ENCODE measurements at regions of chr1 and their contacts with region 1.

Region 1: GRCh38 chr1:31564134-31564989 is 12.0 kb upstream of the TINAGL1 start:
- DNase-seq: peak; percentile 80
- CTCF ChIP-seq: peak; percentile 64

Region 2: DNA sequence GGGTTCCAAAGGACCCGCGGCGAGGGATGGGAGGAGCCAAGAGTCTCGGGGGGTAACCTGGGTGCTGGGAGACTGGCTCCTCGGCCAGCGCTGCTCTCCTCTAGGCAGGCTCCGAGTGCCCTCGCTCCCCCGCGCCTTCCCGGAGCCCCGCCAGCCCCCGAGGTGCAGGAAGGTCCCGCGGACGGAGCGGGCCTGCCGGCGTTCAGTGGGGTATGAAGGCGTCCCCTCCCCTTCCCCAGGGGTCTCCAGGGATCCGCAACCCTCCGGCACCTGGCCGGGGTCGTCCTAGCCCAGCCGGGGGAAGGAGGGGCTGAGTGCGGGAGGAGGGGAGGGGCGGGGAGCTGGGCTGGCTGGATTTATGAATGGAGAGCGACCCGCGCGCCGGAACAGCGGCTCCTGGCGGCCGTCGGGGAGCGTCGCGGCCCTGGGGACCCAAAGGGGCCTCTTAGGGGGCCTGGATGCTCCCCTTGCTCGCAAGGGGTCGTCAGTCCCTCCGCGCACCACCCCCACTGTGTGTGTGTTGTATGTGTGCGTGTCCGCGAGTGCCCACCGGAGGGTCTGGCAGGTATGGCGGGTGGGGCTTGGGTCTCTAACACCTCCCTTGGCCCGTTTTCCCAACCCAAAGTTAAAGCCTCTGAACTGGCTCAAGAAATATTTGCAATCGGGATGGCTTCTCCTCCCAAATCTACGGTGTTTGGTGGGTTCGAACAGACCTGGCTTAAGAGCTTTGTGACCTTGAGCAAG is 53.7 kb after region 1 on chr1:
- in situ Hi-C with region 1: loop called (anchors 10 kb)
- DNase-seq: peak; percentile 88
- CTCF ChIP-seq: peak; percentile 65

Region 3: GRCh38 chr1:31822766-31823165 is 258.4 kb after region 1 on chr1:
- in situ Hi-C with region 1: no loop called
- DNase-seq: no peak
- CTCF ChIP-seq: no peak

Region 4: DNA sequence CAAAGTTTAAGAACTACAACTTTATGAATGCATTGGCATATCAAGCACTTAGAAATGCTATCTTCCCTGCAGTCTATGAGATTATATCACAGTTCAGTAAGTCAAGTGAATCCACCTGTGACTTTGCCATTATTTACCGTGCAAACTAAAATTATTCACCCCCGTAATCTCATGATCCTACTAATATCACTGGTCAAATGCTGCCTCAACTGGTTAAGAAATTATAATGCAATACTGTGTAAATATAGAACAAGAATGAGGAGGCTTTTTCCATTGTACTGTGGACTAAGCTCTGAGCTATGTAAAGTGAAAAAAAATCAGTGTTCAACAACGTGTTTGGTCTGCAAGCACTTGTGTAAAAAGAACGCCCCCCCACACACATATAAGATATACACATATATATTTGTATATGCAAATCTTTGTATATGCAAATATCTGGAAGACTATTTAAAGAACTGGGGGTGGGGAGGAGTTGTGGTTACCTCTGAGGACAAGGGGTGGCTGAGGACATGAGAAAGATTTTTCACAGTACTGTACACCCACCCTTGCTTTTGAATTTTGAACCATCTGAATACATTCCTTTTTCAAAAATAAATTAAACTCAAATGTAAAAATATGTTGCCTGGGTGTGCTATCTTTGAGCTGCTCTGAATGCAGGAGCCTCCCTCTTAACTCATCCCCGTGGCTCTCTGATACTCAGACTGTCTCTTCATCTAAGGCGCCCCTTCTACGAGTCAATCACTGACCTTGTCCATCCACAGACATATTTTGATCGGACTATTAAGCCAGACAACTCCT is 316.7 kb after region 1 on chr1:
- in situ Hi-C with region 1: no loop called
- DNase-seq: peak; percentile 67
- CTCF ChIP-seq: no peak